ENCODE measurements at regions of chr10 and their contacts with region 1.

Region 1: GRCh38 chr10:75910032-75910431 is 478.6 kb downstream of the LRMDA start:
- DNase-seq: peak; percentile 90
- ATAC-seq: peak; percentile 36; the same call in 1 of the 2 replicates
- H3K4me3 ChIP-seq: no peak overlapping the region
- H3K27ac ChIP-seq: no peak overlapping the region
- H3K4me1 ChIP-seq: peaks cover 7% of the 10 kb centered on the region
- H3K27me3 ChIP-seq: peaks cover 74% of the 10 kb centered on the region
- CTCF ChIP-seq: no peak

Region 2: GRCh38 chr10:75623310-75624093 is 286.5 kb before region 1 on chr10:
- CTCF ChIA-PET with region 1: no interaction called
- POLR2A ChIA-PET with region 1: no interaction called
- intact Hi-C with region 1: loop called (anchors 1 kb)
- DNase-seq: no peak
- ATAC-seq: no peak
- H3K4me3 ChIP-seq: no peak overlapping the region
- H3K27ac ChIP-seq: no peak overlapping the region
- H3K4me1 ChIP-seq: no peaks in the 10 kb centered on the region
- H3K27me3 ChIP-seq: peaks cover 42% of the 10 kb centered on the region
- CTCF ChIP-seq: no peak

Region 3: DNA sequence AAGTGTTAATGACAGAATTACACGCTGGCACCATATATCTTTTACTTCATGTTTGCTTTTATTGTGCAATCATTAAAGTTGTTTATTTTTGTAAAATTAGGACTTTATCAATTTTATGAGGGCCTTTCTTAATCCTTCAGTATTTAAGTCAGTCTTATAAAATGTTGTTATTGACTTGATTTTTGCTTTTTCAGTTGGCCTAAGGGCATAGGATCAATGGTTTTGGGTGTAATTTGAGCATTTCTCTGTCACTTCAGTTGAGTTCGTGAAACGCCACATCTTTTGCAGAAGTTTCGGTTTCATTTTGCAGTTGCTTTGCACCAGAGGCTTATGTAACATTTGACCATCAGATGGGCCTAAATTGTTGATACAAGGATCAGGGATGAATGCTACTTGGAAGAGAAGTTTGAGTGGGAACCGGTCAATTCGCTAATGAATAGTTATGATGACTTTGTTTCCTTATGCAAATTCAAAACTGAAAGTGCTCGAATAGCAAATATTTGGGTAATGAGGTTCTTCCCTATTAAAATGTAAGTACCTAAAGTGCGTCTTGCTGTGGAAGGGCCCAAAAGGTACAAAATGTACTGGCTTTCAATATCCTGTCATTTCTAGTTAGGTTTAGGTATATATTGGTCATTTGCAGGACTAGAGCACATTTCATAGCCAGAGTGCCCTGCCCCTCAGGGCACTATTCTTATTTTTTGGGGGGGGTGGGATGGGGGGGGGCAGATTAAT is 137.7 kb before region 1 on chr10:
- CTCF ChIA-PET with region 1: no interaction called
- POLR2A ChIA-PET with region 1: no interaction called
- intact Hi-C with region 1: loop called (anchors 2 kb)
- DNase-seq: peak; percentile 68
- ATAC-seq: no peak
- H3K4me3 ChIP-seq: peak overlapping the region; percentile 52
- H3K27ac ChIP-seq: peak overlapping the region; percentile 76
- H3K4me1 ChIP-seq: peaks cover 48% of the 10 kb centered on the region
- H3K27me3 ChIP-seq: peaks cover 17% of the 10 kb centered on the region; the same call in 1 of the 2 replicates
- CTCF ChIP-seq: no peak

Region 4: DNA sequence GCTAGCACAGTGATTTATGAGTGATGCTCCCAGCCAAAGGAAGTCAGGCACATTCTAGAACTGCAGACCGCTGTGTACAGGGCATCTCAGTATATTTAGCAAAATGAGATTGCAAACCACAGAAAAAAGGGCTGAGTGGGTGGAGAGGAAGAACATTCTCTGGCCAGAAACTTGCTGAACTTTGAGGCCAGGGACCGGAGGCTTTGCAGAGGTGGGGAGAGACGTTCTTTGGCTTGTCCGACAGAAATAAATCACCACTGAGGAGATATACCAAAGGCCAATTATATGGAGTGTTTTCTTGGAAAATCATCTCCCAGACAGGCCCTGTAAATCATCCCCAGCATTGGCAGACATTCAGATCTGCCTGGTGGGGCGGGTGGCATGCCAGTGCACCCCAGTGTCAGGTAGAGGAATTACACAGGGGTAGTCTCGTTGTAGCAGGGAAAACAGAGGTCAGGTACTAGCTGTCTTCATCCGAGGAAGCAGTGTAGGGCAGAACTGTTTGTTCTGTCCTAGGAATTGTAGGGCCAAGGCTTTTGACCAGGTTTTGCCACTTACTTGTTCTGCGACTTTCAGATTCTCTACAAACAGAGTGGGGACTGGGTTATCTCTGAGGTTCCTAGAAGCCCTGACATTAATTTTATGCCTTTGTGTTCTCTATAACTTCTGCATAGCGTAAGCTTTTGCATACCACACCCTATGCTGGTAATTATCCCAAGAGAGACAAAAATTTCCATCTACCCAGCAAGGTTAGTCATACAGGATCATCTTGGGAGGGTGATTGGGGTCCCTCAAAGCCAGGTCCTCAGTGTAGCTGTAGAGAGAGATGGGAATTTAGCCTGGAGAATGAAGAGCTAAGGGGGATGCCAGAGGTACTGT is 177.0 kb after region 1 on chr10:
- CTCF ChIA-PET with region 1: no interaction called
- POLR2A ChIA-PET with region 1: no interaction called
- intact Hi-C with region 1: loop called (anchors 5 kb)
- DNase-seq: peak; percentile 98
- ATAC-seq: peak; percentile 84
- H3K4me3 ChIP-seq: no peak overlapping the region
- H3K27ac ChIP-seq: no peak overlapping the region
- H3K4me1 ChIP-seq: no peaks in the 10 kb centered on the region; the same call in 1 of the 2 replicates
- H3K27me3 ChIP-seq: peaks cover 47% of the 10 kb centered on the region
- CTCF ChIP-seq: peak; percentile 100

Measured in PC-3 (cell line).